ENCODE measurements at regions of chr2 and their contacts with region 1.

Region 1: GRCh38 chr2:205925373-205926337 is 160.3 kb downstream of the INO80D start:
- DNase-seq: peak; percentile 81
- H3K4me3 ChIP-seq: peak overlapping the region in 2 of 4 donors; percentile 3 to 16
- H3K27ac ChIP-seq: peak overlapping the region in 2 of 4 donors; percentile 7 to 14
- H3K4me1 ChIP-seq: peaks cover 3 to 27% (median 19%) of the 10 kb centered on the region in 4 donors
- H3K27me3 ChIP-seq: peaks cover 11% of the 10 kb centered on the region
- CTCF ChIP-seq: peak; percentile 91 to 94 (median 92)
- EP300 ChIP-seq: no peak
- POLR2A ChIP-seq: no peak

Region 2: DNA sequence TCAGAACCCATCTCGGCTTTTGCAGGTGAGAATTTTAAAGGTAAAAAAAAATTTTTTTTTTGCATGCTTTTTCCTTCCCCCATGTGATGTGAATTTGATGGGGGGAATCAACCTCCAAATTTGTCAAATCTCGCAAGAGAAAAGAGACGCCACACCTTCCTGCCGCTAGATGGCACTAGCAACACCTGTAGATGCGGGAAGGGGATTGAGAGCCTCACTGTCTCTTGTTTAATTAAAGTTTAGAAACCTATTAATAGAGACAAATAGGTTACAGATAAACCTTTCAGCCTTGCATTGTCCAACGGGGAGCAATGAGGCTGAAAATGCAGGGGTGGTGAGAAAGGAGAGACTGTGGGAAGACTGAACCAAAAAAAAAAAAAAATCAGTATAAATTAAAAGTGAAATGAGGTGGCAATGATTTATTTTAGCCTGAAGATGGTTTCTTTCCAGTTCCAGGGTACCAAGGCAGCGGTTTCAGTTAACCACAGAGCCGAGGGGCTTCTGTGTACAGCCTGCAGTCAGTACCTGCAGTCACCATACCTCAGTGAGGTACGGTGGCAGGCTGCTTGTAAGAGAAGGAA is 158.8 kb before region 1 on chr2:
- in situ Hi-C with region 1: loop called in 1 of 4 experiments (anchors 10 kb)
- intact Hi-C with region 1: loop called (anchors 5 kb)
- DNase-seq: peak; percentile 68
- H3K4me3 ChIP-seq: no peak overlapping the region
- H3K27ac ChIP-seq: peak overlapping the region; percentile 68 to 86 (median 74)
- H3K4me1 ChIP-seq: peaks cover 38 to 80% (median 53%) of the 10 kb centered on the region in 4 donors
- H3K27me3 ChIP-seq: no peaks in the 10 kb centered on the region
- CTCF ChIP-seq: peak; percentile 80 to 93 (median 89)
- EP300 ChIP-seq: no peak
- POLR2A ChIP-seq: no peak

Region 3: GRCh38 chr2:205776139-205776538 is 149.5 kb before region 1 on chr2:
- in situ Hi-C with region 1: loop called in 1 of 4 experiments (anchors 10 kb)
- intact Hi-C with region 1: no loop called
- DNase-seq: peak; percentile 58
- H3K4me3 ChIP-seq: no peak overlapping the region
- H3K27ac ChIP-seq: peak overlapping the region; percentile 19 to 86 (median 66)
- H3K4me1 ChIP-seq: peaks cover 2 to 22% (median 12%) of the 10 kb centered on the region in 4 donors
- H3K27me3 ChIP-seq: no peaks in the 10 kb centered on the region
- CTCF ChIP-seq: peak; percentile 54 to 63 (median 57)
- EP300 ChIP-seq: no peak
- POLR2A ChIP-seq: no peak

Measured in transverse colon (tissue), 4 donors.